Activated B cell treated with CpG ODN at 0.5 μM for 24 hours (primary cell): ENCODE measurements at regions of chr1 and their contacts with region 1.

Region 1: DNA sequence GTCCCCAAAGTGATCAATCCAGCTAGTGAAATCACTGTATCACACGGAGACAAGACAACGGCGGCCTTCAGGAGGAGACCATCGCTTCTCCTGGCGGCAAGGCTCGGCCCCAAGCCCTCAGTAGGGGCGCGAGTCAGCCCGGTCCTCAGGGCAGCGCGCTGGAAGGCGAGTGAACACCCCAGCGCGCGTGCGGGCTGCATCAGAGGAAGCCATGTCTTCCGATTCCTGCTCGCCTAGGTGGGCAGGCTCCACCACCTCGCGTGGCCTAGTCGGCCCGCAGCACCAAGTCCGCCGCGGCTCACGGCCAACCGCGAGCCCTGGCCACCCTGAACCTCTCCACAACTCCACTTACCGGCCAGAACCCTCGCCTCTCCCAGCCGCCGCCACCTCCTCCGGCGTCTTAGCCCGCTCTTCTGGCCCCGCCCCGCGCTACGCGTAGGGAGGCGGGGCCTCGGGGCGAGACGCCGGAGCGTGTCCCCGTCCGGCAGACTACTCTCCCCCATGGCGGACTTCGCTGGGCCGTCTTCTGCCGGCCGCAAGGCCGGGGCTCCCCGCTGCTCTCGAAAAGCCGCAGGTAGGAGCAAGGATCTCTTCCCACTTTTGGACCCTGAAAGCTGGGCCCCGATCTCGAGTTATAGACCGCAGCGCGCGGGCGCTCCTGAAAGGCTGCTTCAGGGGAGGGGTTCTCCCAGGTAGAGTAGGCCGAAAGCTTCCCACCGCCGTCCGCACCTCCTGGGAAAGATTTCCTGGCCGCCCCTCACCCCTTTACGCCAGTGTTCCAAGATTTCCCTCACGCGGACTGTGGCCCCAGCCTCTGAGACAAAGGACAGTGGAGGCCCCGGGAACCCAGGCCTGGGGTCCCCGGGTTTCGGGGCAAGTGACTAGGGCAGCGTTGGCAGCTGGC is at the starts of genes GLMN and RPAP2:
- DNase-seq: peak; percentile 82
- ATAC-seq: peak; percentile 96
- H3K4me3 Mint-ChIP-seq: peak within 1 kb of the TSS; percentile 99
- H3K27ac Mint-ChIP-seq: peak within 1 kb of the TSS; percentile 99
- H3K4me1 Mint-ChIP-seq: peaks cover 31% of the 10 kb centered on the region
- H3K27me3 Mint-ChIP-seq: no peaks in the 10 kb centered on the region
- CTCF ChIP-seq: no peak
- total RNA-seq, gene GLMN: 11.1 and 14.7 TPM in 2 replicates
- total RNA-seq, gene RPAP2: 27.1 and 31.7 TPM in 2 replicates

Region 2: GRCh38 chr1:91500756-91501522 is 797.9 kb before region 1 on chr1 and contains the start of gene CDC7:
- CTCF ChIA-PET with region 1: no interaction called
- POLR2A ChIA-PET with region 1: no interaction called
- intact Hi-C with region 1: loop called (anchors 1 kb)
- DNase-seq: peak; percentile 83
- ATAC-seq: peak; percentile 88
- H3K4me3 Mint-ChIP-seq: no peak within 1 kb of the TSS
- H3K27ac Mint-ChIP-seq: no peak within 1 kb of the TSS
- H3K4me1 Mint-ChIP-seq: peaks cover 16% of the 10 kb centered on the region
- H3K27me3 Mint-ChIP-seq: no peaks in the 10 kb centered on the region
- CTCF ChIP-seq: no peak
- total RNA-seq, gene CDC7: 5.8 and 7.3 TPM in 2 replicates

Region 3: GRCh38 chr1:92398519-92398918 is 99.7 kb after region 1 on chr1:
- CTCF ChIA-PET with region 1: no interaction called
- POLR2A ChIA-PET with region 1: no interaction called
- intact Hi-C with region 1: loop called (anchors 1 kb)
- DNase-seq: no peak
- ATAC-seq: no peak
- H3K4me3 Mint-ChIP-seq: no peak overlapping the region
- H3K27ac Mint-ChIP-seq: peak overlapping the region; percentile 24
- H3K4me1 Mint-ChIP-seq: peaks cover 19% of the 10 kb centered on the region
- H3K27me3 Mint-ChIP-seq: no peaks in the 10 kb centered on the region
- CTCF ChIP-seq: no peak

Region 4: GRCh38 chr1:92527670-92528069 is 228.8 kb after region 1 on chr1:
- CTCF ChIA-PET with region 1: no interaction called
- POLR2A ChIA-PET with region 1: interaction called, 10 read pairs
- intact Hi-C with region 1: no loop called
- DNase-seq: no peak
- ATAC-seq: no peak
- H3K4me3 Mint-ChIP-seq: no peak overlapping the region
- H3K27ac Mint-ChIP-seq: no peak overlapping the region
- H3K4me1 Mint-ChIP-seq: no peaks in the 10 kb centered on the region
- H3K27me3 Mint-ChIP-seq: no peaks in the 10 kb centered on the region
- CTCF ChIP-seq: no peak

Region 5: GRCh38 chr1:92831762-92832536 is 533.1 kb after region 1 on chr1 and contains the start of gene RPL5:
- CTCF ChIA-PET with region 1: no interaction called
- POLR2A ChIA-PET with region 1: interaction called, 6 read pairs
- intact Hi-C with region 1: loop called (anchors 5 kb)
- DNase-seq: peak; percentile 98
- ATAC-seq: peak; percentile 90
- H3K4me3 Mint-ChIP-seq: peak within 1 kb of the TSS; percentile 99
- H3K27ac Mint-ChIP-seq: peak within 1 kb of the TSS; percentile 97
- H3K4me1 Mint-ChIP-seq: peaks cover 48% of the 10 kb centered on the region
- H3K27me3 Mint-ChIP-seq: no peaks in the 10 kb centered on the region
- CTCF ChIP-seq: no peak
- total RNA-seq, gene RPL5: 1,685 and 1,766 TPM in 2 replicates